ENCODE measurements at regions of chr1 and their contacts with region 1.

Region 1: GRCh38 chr1:152459596-152460528 is 45.8 kb upstream of the CRNN start:
- DNase-seq: peak; percentile 63
- H3K4me3 ChIP-seq: no peak overlapping the region
- H3K27ac ChIP-seq: no peak overlapping the region
- H3K4me1 ChIP-seq: no peaks in the 10 kb centered on the region
- H3K27me3 ChIP-seq: peaks cover 0 to 4% of the 10 kb centered on the region in 2 experiments
- CTCF ChIP-seq: peak; percentile 88 to 91
- POLR2A ChIP-seq: no peak

Region 2: GRCh38 chr1:152110860-152111514 is 348.9 kb before region 1 on chr1:
- CTCF ChIA-PET with region 1: interaction called, 28 read pairs
- POLR2A ChIA-PET with region 1: no interaction called
- dilution Hi-C with region 1: no loop called
- intact Hi-C with region 1: no loop called
- DNase-seq: peak; percentile 58
- H3K4me3 ChIP-seq: peak overlapping the region; percentile 19 to 35 (median 33)
- H3K27ac ChIP-seq: no peak overlapping the region
- H3K4me1 ChIP-seq: peaks cover 33% of the 10 kb centered on the region
- H3K27me3 ChIP-seq: peaks cover 75 to 93% of the 10 kb centered on the region in 2 experiments
- CTCF ChIP-seq: no peak
- POLR2A ChIP-seq: no peak

Region 3: GRCh38 chr1:152189657-152190442 is 270.0 kb before region 1 on chr1:
- CTCF ChIA-PET with region 1: interaction called, 296 read pairs
- POLR2A ChIA-PET with region 1: no interaction called
- dilution Hi-C with region 1: no loop called
- intact Hi-C with region 1: loop called (anchors 1 kb)
- DNase-seq: peak; percentile 65
- H3K4me3 ChIP-seq: peak overlapping the region in 2 of 3 experiments; percentile 43 to 48
- H3K27ac ChIP-seq: no peak overlapping the region
- H3K4me1 ChIP-seq: peaks cover 5% of the 10 kb centered on the region
- H3K27me3 ChIP-seq: peaks cover 0 to 4% of the 10 kb centered on the region in 2 experiments
- CTCF ChIP-seq: peak; percentile 65 to 72
- POLR2A ChIP-seq: no peak

Region 4: DNA sequence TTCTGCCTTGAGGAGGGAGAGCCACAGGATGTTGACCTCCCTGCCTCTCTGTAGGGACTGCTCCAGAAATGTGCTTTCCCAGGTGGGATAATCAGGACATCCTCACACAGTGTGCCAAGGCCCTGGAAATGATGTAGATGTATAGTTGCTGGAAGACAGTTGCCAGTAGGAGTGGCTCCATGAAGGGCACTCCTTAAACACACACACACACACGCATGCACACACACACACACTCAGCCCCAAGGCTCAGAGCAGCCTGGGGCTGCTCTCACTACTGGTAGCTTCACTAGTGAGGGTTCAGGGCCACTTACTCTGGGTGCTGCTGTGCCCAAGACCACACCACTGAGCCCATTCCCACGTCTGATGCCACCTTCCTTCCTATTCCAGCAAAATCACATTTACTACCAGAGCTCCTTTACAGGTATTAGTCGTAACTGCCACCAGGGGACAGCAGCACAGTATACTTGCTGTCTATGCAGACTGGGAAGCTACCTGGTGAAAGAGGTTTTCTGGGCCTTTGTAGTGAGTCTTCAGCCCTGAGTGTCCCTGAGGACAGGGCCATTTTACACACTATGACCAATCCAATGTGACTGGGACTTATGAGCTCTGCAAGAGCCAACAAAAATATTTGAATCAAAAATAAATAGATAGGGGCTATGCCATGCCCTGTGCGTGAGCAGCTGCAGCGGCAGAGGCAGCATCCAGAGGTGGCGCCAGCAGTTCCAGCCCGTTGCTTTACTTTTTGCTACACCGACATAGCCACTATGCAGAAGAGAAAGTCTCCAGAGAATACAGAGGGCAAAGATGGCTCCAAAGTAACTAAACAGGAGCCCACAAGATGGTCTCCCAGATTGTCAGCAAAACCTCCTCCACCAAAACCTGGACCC is 60.8 kb before region 1 on chr1:
- CTCF ChIA-PET with region 1: interaction called, 134 read pairs
- POLR2A ChIA-PET with region 1: no interaction called
- dilution Hi-C with region 1: no loop called
- intact Hi-C with region 1: loop called (anchors 5 kb)
- DNase-seq: no peak
- H3K4me3 ChIP-seq: no peak overlapping the region
- H3K27ac ChIP-seq: no peak overlapping the region
- H3K4me1 ChIP-seq: no peaks in the 10 kb centered on the region
- H3K27me3 ChIP-seq: no peaks in the 10 kb centered on the region
- CTCF ChIP-seq: peak in 1 of 2 donors; percentile 19
- POLR2A ChIP-seq: no peak

Region 5: GRCh38 chr1:152440635-152441471 is 19.0 kb before region 1 on chr1:
- CTCF ChIA-PET with region 1: interaction called, 76 read pairs
- POLR2A ChIA-PET with region 1: interaction called, 5 read pairs
- dilution Hi-C with region 1: no loop called
- intact Hi-C with region 1: loop called (anchors 2 kb)
- DNase-seq: peak; percentile 57
- H3K4me3 ChIP-seq: no peak overlapping the region
- H3K27ac ChIP-seq: no peak overlapping the region
- H3K4me1 ChIP-seq: no peaks in the 10 kb centered on the region
- H3K27me3 ChIP-seq: peaks cover 0 to 4% of the 10 kb centered on the region in 2 experiments
- CTCF ChIP-seq: peak; percentile 73 to 87
- POLR2A ChIP-seq: no peak

Region 6: GRCh38 chr1:152495066-152495675 is 35.3 kb after region 1 on chr1:
- CTCF ChIA-PET with region 1: interaction called, 10 read pairs
- POLR2A ChIA-PET with region 1: no interaction called
- dilution Hi-C with region 1: no loop called
- intact Hi-C with region 1: no loop called
- DNase-seq: peak; percentile 21
- H3K4me3 ChIP-seq: no peak overlapping the region
- H3K27ac ChIP-seq: no peak overlapping the region
- H3K4me1 ChIP-seq: no peaks in the 10 kb centered on the region
- H3K27me3 ChIP-seq: no peaks in the 10 kb centered on the region
- CTCF ChIP-seq: peak; percentile 30 to 59
- POLR2A ChIP-seq: no peak

Region 7: DNA sequence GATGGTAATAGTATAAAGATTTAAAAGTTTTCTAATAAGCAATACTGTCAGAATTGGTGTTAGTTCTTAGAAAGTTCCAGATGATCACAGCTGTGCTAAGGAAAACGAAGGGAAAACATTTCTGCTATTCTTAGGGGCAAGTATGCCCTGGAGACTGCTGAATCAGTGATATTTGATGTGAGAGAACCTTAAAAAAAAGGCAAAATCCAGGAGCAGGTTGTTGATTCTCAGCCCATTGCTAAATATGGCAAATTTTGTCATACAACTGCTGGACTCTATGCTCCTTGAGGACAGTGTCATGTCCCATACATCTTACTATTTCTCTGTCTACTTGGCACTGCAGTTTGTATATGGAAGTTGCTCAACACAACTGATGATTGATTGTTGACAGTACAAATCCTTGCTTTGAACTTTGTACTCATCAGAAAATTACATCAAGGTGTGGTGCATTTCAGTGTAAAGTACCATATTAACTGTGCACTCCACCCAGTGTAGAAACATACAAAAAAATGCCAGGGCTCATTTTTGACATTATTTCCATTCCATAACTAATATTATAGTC is 65.3 kb after region 1 on chr1:
- CTCF ChIA-PET with region 1: no interaction called
- POLR2A ChIA-PET with region 1: no interaction called
- dilution Hi-C with region 1: no loop called
- intact Hi-C with region 1: no loop called
- DNase-seq: no peak
- H3K4me3 ChIP-seq: no peak overlapping the region
- H3K27ac ChIP-seq: no peak overlapping the region
- H3K4me1 ChIP-seq: no peaks in the 10 kb centered on the region
- H3K27me3 ChIP-seq: no peaks in the 10 kb centered on the region
- CTCF ChIP-seq: no peak
- POLR2A ChIP-seq: no peak

Measured in endothelial cell of umbilical vein (primary cell).